ENCODE measurements at regions of chr14 and their contacts with region 1.

Region 1: GRCh38 chr14:34199564-34199963 is 248.7 kb upstream of the EGLN3 start:
- DNase-seq: no peak
- ATAC-seq: peak; percentile 30; the same call in 1 of the 3 replicates
- H3K4me3 ChIP-seq: no peak overlapping the region
- H3K27ac ChIP-seq: no peak overlapping the region
- H3K4me1 ChIP-seq: no peaks in the 10 kb centered on the region
- H3K27me3 ChIP-seq: no peaks in the 10 kb centered on the region
- CTCF ChIP-seq: no peak
- EP300 ChIP-seq: no peak
- POLR2A ChIP-seq: no peak
- RAD21 ChIP-seq: no peak

Region 2: GRCh38 chr14:34211732-34212131 is 12.2 kb after region 1 on chr14:
- CTCF ChIA-PET with region 1: interaction called, 3 read pairs
- POLR2A ChIA-PET with region 1: interaction called, 7 read pairs
- RAD21 ChIA-PET with region 1: interaction called, 3 read pairs
- SMC1A ChIA-PET with region 1: interaction called, 10 read pairs
- in situ Hi-C with region 1: no loop called
- intact Hi-C with region 1: no loop called
- DNase-seq: peak; percentile 45
- ATAC-seq: peak; percentile 91
- H3K4me3 ChIP-seq: no peak overlapping the region
- H3K27ac ChIP-seq: no peak overlapping the region
- H3K4me1 ChIP-seq: no peaks in the 10 kb centered on the region; the same call in 1 of the 2 replicates
- H3K27me3 ChIP-seq: no peaks in the 10 kb centered on the region; a peak in 1 of 4 replicates
- CTCF ChIP-seq: no peak
- EP300 ChIP-seq: peak; percentile 30 to 74; a peak in 2 of 4 replicates
- POLR2A ChIP-seq: no peak
- RAD21 ChIP-seq: no peak

Region 3: GRCh38 chr14:34347683-34348082 is 148.1 kb after region 1 on chr14:
- CTCF ChIA-PET with region 1: no interaction called
- POLR2A ChIA-PET with region 1: no interaction called
- RAD21 ChIA-PET with region 1: no interaction called
- SMC1A ChIA-PET with region 1: no interaction called
- in situ Hi-C with region 1: no loop called
- intact Hi-C with region 1: no loop called
- DNase-seq: peak; percentile 44
- ATAC-seq: peak; percentile 92
- H3K4me3 ChIP-seq: no peak overlapping the region
- H3K27ac ChIP-seq: peak overlapping the region; percentile 39; the same call in 1 of the 2 replicates
- H3K4me1 ChIP-seq: no peaks in the 10 kb centered on the region
- H3K27me3 ChIP-seq: no peaks in the 10 kb centered on the region
- CTCF ChIP-seq: no peak
- EP300 ChIP-seq: no peak
- POLR2A ChIP-seq: no peak
- RAD21 ChIP-seq: no peak

Region 4: DNA sequence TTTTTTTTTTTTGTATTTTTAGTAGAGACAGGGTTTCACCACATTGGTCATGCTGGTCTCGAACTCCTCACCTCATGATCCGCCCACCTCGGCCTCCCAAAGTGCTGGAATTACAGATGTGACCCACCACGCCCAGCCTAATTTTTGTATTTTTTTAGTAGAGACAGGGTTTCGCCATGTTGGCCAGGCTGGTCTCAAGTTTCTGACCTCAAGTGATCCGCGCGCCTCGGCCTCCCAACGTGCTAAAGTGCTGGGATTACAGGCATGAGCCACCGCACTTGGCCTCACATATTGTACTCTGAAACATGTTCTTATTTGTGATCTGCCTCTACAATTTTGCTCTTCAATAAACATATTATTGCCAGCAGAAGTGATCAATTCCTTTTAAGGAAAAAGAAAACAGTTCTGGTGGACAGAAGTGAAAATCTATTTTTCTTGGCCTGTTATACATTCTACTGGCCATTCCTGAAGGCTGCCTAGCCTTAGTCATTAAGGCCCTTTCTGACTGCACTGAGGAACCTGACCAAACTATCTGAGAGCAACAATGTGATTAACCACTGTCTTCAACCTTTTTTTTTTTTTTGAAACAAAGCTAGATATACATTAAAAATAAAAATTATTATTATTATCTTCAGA is 394.3 kb after region 1 on chr14:
- CTCF ChIA-PET with region 1: no interaction called
- POLR2A ChIA-PET with region 1: no interaction called
- RAD21 ChIA-PET with region 1: no interaction called
- SMC1A ChIA-PET with region 1: no interaction called
- in situ Hi-C with region 1: no loop called
- intact Hi-C with region 1: no loop called
- DNase-seq: no peak
- ATAC-seq: no peak
- H3K4me3 ChIP-seq: no peak overlapping the region
- H3K27ac ChIP-seq: no peak overlapping the region
- H3K4me1 ChIP-seq: no peaks in the 10 kb centered on the region
- H3K27me3 ChIP-seq: no peaks in the 10 kb centered on the region
- CTCF ChIP-seq: no peak
- EP300 ChIP-seq: no peak
- POLR2A ChIP-seq: no peak
- RAD21 ChIP-seq: no peak

Measured in GM12878 (cell line).